ENCODE measurements at regions of chr20 and their contacts with region 1.

Region 1: DNA sequence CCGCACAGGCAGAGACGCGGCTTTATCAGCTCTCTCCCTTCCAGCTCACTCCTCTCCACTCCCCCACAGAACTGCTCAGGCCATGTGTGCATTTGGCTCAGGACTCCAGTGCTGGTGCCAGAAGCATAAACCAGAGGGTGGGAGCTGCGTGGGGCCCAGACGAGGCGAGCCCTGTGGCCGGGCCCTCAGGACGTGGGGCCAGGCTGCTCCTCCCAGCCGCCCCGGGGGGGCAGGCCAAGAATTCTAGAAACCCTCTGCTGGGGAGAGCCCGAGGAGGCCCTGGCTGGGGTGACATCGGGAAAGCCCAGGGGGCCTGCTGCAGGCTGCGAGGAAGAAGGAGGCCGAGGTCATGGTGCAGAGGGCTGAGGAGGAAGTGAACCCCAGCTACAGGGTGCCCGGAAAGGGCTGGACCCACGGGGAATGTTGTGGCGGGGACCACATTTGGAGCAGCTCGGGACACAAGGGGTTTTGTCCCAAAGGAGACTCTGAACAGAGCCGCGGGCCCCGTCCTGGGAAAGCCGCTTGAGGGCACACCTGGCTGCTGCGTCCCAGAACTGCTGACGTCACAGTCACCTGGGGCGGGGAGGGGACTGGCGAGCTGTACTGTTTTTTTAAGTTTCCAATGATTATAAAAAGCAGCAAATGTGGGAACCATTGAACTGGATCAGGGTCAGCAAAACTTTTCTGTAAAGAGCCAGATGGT is 107.1 kb downstream of the BANF2 start:
- DNase-seq: peak; percentile 83 to 88
- ATAC-seq: peak; percentile 92 to 96 (median 92)
- H3K4me3 ChIP-seq: peak overlapping the region in 4 of 10 donors; percentile 12 to 31 (median 14)
- H3K27ac ChIP-seq: peak overlapping the region; percentile 3 to 90 (median 76)
- H3K4me1 ChIP-seq: peaks cover 8 to 58% (median 43%) of the 10 kb centered on the region in 9 donors
- H3K27me3 ChIP-seq: no peaks in the 10 kb centered on the region
- CTCF ChIP-seq: peak in 3 of 9 donors; percentile 8 to 22 (median 17)

Region 2: GRCh38 chr20:17710379-17711266 is 96.3 kb before region 1 on chr20:
- intact Hi-C with region 1: no loop called
- DNase-seq: peak in 1 of 2 donors; percentile 6
- ATAC-seq: peak in 4 of 8 donors; percentile 66 to 90 (median 73)
- H3K4me3 ChIP-seq: no peak overlapping the region
- H3K27ac ChIP-seq: no peak overlapping the region
- H3K4me1 ChIP-seq: peaks cover 0 to 22% (median 6%) of the 10 kb centered on the region in 9 donors
- H3K27me3 ChIP-seq: no peaks in the 10 kb centered on the region
- CTCF ChIP-seq: no peak

Region 3: DNA sequence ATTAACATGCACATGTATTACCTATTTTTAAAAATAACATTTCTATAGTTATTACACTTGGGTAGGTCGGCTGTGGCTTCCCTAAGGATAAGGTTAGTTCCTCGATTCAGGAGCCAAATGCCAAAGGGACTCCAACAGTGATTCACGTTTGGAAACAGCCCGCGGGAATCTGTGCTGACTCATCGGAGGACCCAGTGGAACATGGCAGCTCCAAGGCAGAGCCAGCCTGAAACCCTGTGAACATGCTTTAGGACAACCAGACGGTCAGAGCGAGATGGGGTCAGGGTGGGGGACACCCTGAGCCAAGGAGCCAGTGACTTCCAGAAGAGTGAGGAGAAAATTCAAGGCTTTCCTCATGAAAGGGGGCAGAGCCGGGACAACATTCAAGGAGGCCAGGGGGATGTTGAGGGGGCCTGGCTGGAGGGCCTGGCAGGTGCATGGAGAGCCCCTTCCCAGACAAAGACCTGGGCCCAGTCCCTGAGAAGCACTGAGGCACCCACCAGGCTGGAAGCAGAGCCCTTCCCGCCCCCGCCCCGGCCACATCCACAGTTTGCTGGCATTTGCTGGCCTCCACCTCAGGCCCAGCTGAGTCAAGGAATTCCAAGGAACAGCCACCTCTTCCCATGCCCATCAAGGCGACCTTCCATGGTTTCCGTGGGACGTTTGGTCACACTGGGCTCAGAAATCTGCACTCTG is 28.5 kb after region 1 on chr20:
- intact Hi-C with region 1: loop called in 2 of 10 experiments (anchors 1 to 5 kb)
- DNase-seq: peak; percentile 49 to 55
- ATAC-seq: peak; percentile 14 to 81 (median 56)
- H3K4me3 ChIP-seq: no peak overlapping the region
- H3K27ac ChIP-seq: peak overlapping the region; percentile 69 to 96 (median 87)
- H3K4me1 ChIP-seq: peaks cover 6 to 34% (median 28%) of the 10 kb centered on the region in 9 donors
- H3K27me3 ChIP-seq: no peaks in the 10 kb centered on the region
- CTCF ChIP-seq: no peak

Region 4: GRCh38 chr20:17843246-17844132 is 36.6 kb after region 1 on chr20:
- intact Hi-C with region 1: loop called in 1 of 10 experiments (anchors 5 kb)
- DNase-seq: peak; percentile 47 to 69
- ATAC-seq: peak; percentile 57 to 75 (median 68)
- H3K4me3 ChIP-seq: no peak overlapping the region
- H3K27ac ChIP-seq: peak overlapping the region; percentile 56 to 90 (median 78)
- H3K4me1 ChIP-seq: peaks cover 10 to 60% (median 31%) of the 10 kb centered on the region in 9 donors
- H3K27me3 ChIP-seq: no peaks in the 10 kb centered on the region
- CTCF ChIP-seq: no peak